ENCODE measurements at regions of chr3 and their contacts with region 1.

Region 1: DNA sequence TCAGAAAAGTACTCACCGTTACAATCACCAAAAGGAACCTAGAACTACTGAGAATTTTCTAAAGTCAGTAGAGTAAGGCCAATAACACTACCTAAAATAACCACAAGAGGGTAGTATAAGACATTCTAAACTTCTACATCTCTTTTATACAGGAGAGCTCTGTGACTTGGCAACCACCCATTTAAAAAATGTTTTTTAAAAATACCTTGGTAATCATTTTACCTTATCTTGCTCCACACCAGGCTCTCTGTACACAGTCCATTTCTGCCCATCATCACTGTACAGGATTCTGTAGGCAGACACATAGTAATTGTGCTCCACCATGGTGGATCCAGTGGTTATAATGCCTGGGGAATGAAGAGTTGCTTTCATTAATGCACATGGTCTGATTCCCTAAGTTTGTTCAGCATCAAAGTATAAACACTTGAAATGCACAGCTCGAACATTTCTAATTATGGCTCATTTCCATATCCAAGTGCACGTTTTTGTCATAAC is 54.5 kb downstream of the ST3GAL6 start:
- DNase-seq: no peak
- H3K4me3 ChIP-seq: no peak overlapping the region
- H3K27me3 ChIP-seq: no peaks in the 10 kb centered on the region
- CTCF ChIP-seq: peak; percentile 54; the same call in 1 of the 2 replicates

Region 2: DNA sequence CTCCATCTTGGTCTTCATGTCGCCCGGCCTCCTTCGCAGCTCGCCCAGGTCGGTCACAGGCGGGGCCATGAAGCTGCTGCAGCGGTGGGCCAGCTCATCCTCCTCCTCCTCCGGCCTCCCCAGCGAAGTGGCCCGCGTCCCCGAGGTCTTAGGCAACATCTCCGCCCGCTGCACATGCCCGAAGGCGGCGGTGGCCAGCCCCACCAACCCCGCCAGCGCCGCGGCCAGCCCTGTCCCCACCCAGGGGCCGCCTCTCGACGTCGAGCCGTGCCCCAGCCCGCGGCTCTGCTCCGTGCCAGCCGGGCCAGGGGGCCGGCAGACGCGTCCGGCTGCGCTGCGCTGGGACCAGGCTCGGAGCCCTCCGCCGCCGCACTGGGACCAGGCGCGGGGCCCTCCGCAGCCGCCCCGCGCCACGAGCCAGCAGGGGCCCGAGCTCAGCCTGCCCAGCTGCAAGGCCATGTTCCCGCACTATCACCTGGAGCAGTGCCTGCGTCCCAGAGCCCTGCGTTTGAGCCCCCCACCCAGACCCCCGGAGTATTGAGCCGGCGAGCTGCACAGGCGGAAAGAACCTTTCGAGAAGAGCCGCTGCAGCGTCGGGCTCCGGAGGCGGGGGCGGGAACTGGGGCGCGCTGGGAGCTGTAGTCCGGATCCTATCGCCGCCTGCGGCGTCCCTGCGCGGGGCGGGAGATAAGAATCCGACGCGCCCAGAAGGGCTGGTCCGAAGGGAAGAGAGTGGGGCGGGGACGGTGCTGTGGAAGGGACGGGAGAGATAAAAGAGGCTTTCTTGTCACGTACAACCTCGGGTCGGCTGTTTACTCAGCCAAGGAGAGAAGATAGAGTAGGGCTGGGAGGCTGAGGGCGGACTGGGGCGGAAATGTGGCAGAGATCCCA is 224.3 kb before region 1 on chr3 and contains the start of gene CPOX:
- CTCF ChIA-PET with region 1: interaction called, 27 read pairs
- POLR2A ChIA-PET with region 1: no interaction called
- DNase-seq: peak; percentile 35
- H3K4me3 ChIP-seq: peak within 1 kb of the TSS; percentile 81
- H3K27me3 ChIP-seq: peaks cover 4% of the 10 kb centered on the region
- CTCF ChIP-seq: no peak
- polyA plus RNA-seq, gene CPOX: 11.1 and 13.8 TPM in 2 replicates

Region 3: DNA sequence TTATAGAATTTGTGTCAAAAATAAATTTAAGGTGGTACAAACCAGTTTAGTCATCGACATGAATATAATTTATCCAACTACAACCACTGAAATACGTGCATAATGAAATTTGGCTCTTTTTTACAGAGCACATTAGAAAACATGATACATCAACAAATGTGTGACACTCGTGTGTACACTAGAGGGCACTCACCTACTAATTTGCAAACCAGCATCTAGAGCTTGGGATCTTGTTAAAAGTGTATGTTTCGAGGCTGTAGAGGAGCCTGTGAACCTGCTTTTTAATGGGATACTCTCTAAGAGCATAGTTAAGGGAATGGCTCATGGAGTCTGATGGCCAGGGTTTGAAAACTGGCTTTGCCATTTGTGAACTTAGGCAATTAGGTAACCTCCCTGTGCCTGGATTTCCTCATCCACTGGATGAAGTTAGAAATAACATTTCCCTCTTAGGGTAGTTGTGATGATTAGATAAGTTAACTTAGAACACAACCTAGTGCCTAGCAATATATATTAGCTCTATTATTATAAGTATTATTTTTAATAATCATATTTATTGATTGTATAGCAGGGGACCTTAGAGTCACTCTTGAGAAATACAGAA is 215.4 kb before region 1 on chr3:
- CTCF ChIA-PET with region 1: interaction called, 135 read pairs
- POLR2A ChIA-PET with region 1: no interaction called
- DNase-seq: no peak
- H3K4me3 ChIP-seq: no peak overlapping the region
- H3K27me3 ChIP-seq: peaks cover 4% of the 10 kb centered on the region
- CTCF ChIP-seq: peak; percentile 77

Region 4: DNA sequence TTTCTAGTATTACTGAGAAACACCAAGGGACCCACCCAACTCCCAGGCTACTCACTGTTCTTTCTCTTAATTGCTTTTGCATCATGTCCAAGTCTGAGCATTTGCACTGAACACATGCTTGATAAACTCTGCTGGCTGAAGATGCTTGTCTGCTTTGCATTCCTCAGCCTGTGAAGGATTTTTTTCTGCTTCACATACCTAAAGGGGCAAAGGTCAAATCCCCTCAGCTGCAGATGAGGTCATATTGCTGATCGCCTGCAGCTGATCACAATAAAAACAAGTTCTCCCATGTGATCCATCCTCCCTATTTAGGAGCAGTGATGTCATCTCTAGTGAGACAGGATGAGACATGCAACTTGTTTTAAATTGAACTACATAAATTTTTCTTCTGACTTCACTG is 168.5 kb after region 1 on chr3:
- CTCF ChIA-PET with region 1: interaction called, 168 read pairs
- POLR2A ChIA-PET with region 1: no interaction called
- DNase-seq: peak; percentile 82
- H3K4me3 ChIP-seq: no peak overlapping the region
- H3K27me3 ChIP-seq: no peaks in the 10 kb centered on the region
- CTCF ChIP-seq: no peak

Region 5: GRCh38 chr3:98994128-98994762 is 176.7 kb after region 1 on chr3:
- CTCF ChIA-PET with region 1: interaction called, 168 read pairs
- POLR2A ChIA-PET with region 1: no interaction called
- DNase-seq: no peak
- H3K4me3 ChIP-seq: no peak overlapping the region
- H3K27me3 ChIP-seq: no peaks in the 10 kb centered on the region
- CTCF ChIP-seq: peak; percentile 67

Measured in BJ (cell line).